SK-N-SH (cell line): ENCODE measurements at regions of chr17 and their contacts with region 1.

Region 1: GRCh38 chr17:82105882-82106687 is 8.0 kb upstream of the FASN start:
- DNase-seq: peak; percentile 97
- H3K4me3 ChIP-seq: peak overlapping the region in 1 of 2 experiments; percentile 9; a peak in 1 of 4 replicates
- H3K27ac ChIP-seq: peak overlapping the region; percentile 16 to 93; a peak in 3 of 4 replicates
- H3K4me1 ChIP-seq: peaks cover 11 to 63% of the 10 kb centered on the region in 2 experiments; a peak in 3 of 4 replicates
- H3K27me3 ChIP-seq: no peaks in the 10 kb centered on the region
- CTCF ChIP-seq: peak; percentile 49
- EP300 ChIP-seq: peak in 1 of 2 experiments; percentile 42; a peak in 1 of 4 replicates
- RAD21 ChIP-seq: peak; percentile 38

Region 2: DNA sequence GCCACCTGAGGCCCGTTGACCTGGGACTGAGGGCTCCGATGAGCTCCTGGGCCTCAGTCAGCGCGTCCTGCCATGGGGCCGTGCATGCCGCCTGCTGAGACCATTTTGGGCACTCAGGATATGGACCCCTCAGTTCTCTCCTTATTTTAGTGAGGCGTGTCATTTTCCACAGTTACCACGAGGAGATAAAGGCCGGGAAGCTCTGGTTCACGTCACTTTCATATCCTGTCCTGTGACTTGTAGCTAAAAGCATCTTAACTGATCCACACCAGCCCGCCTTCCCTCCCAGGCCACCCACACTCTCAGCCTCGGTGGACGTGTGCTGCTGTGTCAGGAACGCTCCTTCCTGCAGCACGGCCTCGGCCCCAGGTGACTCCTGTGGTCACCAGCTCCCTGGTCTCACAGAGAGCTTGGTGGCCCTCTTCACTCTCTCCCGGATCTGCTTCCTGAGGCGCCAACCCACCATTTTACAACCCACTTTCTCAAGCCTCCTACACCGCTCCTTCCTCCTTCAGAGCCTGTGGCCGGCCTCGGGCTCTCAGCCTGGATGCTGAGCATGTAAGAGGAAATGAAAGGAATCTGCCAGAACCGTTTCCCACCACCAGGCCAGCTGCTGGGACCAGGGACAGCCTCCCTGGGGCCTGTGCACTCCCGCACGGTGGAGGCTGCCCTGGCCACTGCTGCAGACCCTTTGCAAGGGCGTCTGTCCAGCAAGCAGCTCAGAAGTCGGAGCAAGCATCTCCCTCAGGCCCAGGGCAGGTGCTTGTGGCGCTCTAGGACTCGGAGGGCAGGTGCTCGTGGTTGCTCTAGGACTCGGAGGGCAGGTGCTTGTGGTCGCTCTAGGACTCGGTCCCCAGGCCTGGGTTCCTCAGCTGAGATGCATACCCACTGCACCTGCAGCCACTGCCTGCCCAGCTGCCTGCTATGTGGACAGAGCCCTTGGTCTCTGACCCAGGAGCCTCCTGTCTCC is 15.9 kb after region 1 on chr17:
- CTCF ChIA-PET with region 1: interaction called, 18 read pairs
- POLR2A ChIA-PET with region 1: no interaction called
- DNase-seq: peak; percentile 55
- H3K4me3 ChIP-seq: no peak overlapping the region
- H3K27ac ChIP-seq: no peak overlapping the region; a peak in 1 of 4 replicates
- H3K4me1 ChIP-seq: peaks cover 0 to 7% of the 10 kb centered on the region in 2 experiments; a peak in 1 of 4 replicates
- H3K27me3 ChIP-seq: no peaks in the 10 kb centered on the region
- CTCF ChIP-seq: no peak
- EP300 ChIP-seq: no peak
- RAD21 ChIP-seq: no peak

Region 3: GRCh38 chr17:82145550-82146190 is 39.6 kb after region 1 on chr17:
- CTCF ChIA-PET with region 1: interaction called, 11 read pairs
- POLR2A ChIA-PET with region 1: no interaction called
- DNase-seq: no peak
- H3K4me3 ChIP-seq: no peak overlapping the region
- H3K27ac ChIP-seq: no peak overlapping the region
- H3K4me1 ChIP-seq: no peaks in the 10 kb centered on the region
- H3K27me3 ChIP-seq: no peaks in the 10 kb centered on the region
- CTCF ChIP-seq: no peak
- EP300 ChIP-seq: no peak
- RAD21 ChIP-seq: no peak